Left cardiac atrium (tissue), 4 donors: ENCODE measurements at regions of chr1 and their contacts with region 1.

Region 1: GRCh38 chr1:174976436-174977108 is 23.2 kb upstream of the CACYBP start:
- DNase-seq: no peak
- ATAC-seq: peak in 1 of 2 donors; percentile 81

Region 2: DNA sequence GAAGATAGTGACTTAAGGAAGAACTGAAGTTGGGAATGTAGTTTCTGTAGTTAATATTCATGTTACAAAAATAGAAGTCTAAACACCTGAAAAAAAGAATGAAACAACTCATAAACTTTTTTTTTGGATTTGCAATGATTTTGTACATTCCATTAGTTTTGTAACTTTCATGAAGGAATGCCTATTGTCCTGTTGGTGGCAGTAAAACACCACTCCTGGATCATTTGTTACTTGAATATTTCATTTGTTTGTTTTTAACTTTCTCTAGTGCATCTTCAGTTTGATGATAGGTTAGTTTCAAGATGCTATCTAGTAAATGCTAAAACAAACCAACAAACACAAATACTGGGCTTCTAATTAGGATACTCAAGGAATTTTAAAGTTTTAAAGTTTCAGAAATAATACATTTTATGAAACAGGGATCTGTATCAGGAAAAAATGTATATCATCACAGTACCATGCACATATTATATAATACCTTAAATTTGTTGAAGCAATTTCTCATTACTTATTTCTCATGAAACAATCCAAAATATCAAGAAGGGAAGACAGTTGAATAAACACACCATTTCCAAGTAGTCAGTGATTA is 206.5 kb before region 1 on chr1:
- intact Hi-C with region 1: loop called (anchors 5 to 10 kb)
- DNase-seq: no peak
- ATAC-seq: peak in 1 of 2 donors; percentile 41

Region 3: DNA sequence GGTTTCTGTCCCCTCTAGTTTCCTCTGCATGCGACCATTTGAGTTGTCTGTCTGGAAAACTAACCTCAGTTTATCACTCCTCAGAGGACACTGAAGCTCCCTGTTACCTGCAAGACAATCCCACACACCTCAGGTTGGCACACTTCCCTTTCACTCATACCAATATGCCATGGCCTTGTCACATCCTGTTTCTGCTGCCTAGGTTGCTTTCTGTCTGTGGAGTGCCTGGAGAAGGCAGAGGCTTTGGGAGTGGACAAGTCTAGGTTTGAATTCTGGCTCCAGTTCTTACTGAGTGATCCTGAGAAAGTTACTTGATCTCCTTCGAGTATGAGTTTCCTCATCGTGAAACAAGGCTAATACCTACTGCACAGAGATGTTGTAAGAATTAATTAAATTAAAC is 148.3 kb before region 1 on chr1:
- intact Hi-C with region 1: no loop called
- DNase-seq: no peak
- ATAC-seq: no peak

Region 4: DNA sequence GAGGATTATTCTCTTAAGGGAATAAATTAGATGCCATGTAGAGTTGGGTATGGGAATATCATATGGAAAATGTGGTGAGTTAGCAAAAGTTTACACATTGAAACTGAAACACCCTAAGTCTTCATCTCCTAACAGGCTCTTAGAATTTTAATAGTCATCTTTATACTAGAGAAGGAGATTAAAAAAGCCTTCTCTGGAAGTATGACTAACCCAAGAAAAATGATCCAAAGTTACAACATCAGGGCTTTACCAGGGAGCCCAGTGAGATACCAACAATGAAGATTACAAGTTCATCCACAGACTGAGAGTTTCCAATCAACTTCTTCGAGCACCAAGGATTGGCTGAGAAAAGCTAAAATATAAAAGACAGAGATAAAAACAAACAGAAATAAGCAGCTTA is 286.0 kb after region 1 on chr1:
- intact Hi-C with region 1: no loop called
- DNase-seq: no peak
- ATAC-seq: no peak